Common myeloid progenitor, CD34-positive (primary cell): ENCODE measurements at regions of chr2 and their contacts with region 1.

Region 1: DNA sequence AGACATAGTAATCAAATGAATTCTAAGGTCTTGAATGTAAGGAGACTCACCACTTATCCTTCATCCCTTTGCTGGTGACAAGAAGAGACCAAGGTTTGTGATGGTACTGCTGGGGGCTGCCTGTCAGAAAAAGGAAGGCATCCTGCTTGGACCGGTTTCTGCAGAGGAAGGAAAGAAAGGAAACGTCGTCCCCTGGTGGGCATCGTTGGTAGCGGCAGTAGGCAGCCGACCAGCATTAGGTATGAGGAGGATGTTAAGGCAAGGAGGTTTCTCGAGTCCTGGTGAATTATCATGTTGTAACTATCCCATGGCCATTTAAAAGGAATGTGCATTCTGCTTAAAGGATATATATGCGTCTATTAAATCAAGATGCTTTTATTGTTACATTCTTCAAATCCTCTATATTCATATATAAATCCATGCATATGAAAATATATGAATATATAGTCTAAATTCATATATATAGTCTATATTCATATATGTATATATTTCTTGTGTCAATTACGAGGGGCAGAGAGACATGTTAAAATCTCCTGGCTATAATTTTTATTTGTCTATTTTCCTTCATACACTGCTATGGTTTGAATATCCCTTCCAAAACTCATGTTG is 94.4 kb upstream of the TGFA start:
- DNase-seq: peak; percentile 69 to 84 (median 76)
- H3K4me3 ChIP-seq: no peak overlapping the region
- H3K27ac ChIP-seq: no peak overlapping the region
- H3K4me1 ChIP-seq: no peaks in the 10 kb centered on the region
- H3K27me3 ChIP-seq: peaks cover 0 to 5% (median 3%) of the 10 kb centered on the region in 5 experiments

Region 2: GRCh38 chr2:70616168-70616694 is 31.7 kb before region 1 on chr2:
- CTCF ChIA-PET with region 1: interaction called, 10 read pairs
- POLR2A ChIA-PET with region 1: no interaction called
- DNase-seq: no peak
- H3K4me3 ChIP-seq: no peak overlapping the region
- H3K27ac ChIP-seq: no peak overlapping the region
- H3K4me1 ChIP-seq: no peaks in the 10 kb centered on the region
- H3K27me3 ChIP-seq: peaks cover 0 to 10% (median 3%) of the 10 kb centered on the region in 5 experiments

Region 3: DNA sequence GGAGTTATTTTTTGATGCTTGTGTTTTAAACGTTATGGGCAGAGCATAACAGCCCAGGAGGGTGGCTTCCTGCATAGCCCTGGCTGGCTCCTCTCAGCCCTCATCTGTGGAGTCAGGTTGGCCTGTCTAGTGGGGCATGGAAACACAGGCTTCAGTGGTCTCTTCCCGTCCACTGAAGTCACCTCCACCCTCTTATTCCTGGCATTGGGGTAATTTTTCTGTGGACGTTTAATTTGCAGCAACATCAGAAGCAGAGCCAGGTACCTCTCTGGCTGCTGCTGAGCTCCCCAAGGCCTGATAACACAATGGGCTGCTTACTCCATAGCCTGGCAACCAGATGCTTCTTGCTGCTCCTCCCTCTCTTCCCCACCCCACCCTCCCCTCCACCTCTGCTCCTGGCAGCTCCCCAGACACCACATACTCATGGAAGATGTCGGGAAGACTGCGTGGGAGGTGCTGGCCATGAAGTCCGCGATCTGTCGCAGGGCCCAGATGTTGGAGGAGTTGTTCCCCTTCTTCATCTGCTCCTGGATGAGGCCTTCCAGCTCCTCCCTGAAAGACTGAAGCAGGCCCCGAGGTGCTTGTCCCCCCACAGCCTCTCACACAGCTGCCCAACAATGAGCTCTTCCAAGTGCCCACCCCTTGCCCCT is 56.0 kb after region 1 on chr2:
- CTCF ChIA-PET with region 1: no interaction called
- POLR2A ChIA-PET with region 1: no interaction called
- DNase-seq: no peak
- H3K4me3 ChIP-seq: no peak overlapping the region
- H3K27ac ChIP-seq: no peak overlapping the region
- H3K4me1 ChIP-seq: no peaks in the 10 kb centered on the region
- H3K27me3 ChIP-seq: no peaks in the 10 kb centered on the region

Region 4: DNA sequence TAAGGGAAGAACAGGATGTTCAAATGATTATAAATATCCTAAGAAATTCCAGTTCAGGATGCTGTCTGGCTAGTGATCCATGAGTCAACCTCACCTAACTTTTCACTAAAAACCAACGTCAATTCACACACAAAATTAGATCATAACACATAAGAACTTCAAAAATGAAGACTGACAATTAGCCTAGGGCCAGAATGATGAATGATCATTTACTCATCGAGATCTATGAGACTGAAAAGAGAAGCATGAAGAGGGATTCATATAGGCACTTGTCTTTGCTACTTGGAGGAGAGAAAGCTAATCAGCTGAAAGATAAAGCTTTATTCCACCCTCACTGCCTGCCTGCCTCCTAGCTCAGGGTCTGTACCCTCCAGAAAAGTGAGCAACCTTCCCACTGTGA is 90.2 kb after region 1 on chr2:
- CTCF ChIA-PET with region 1: no interaction called
- POLR2A ChIA-PET with region 1: no interaction called
- DNase-seq: no peak
- H3K4me3 ChIP-seq: no peak overlapping the region
- H3K27ac ChIP-seq: no peak overlapping the region
- H3K4me1 ChIP-seq: no peaks in the 10 kb centered on the region
- H3K27me3 ChIP-seq: peaks cover 6 to 20% (median 13%) of the 10 kb centered on the region in 5 experiments

Region 5: DNA sequence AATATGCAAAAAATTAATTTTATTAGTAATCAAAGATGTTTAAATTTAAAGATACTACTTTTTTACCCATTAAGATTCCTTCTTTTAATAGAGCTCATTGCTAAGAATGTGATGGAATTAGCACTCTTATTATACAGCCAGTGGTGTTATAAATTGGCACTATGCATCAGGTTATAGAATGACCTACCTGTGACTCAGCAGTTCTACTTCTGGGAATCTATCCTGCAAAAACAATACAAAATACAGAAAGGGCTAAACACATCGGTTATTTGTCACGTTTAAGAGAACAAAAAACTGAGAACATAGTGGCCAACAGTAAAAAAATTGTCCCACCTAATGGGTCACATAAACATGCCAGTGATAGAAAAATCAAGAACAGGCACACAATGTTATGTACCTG is 129.5 kb after region 1 on chr2:
- CTCF ChIA-PET with region 1: no interaction called
- POLR2A ChIA-PET with region 1: no interaction called
- DNase-seq: no peak
- H3K4me3 ChIP-seq: no peak overlapping the region
- H3K27ac ChIP-seq: no peak overlapping the region
- H3K4me1 ChIP-seq: peaks cover 0 to 4% (median 1%) of the 10 kb centered on the region in 4 experiments
- H3K27me3 ChIP-seq: peaks cover 4 to 18% (median 11%) of the 10 kb centered on the region in 5 experiments